Activated naive CD8-positive, alpha-beta T cell treated with anti-CD3 and anti-CD28 coated beads, Interleukin-2, amount 10 ng/mL, durations not matched to agents 7 days and 5 days (primary cell): ENCODE measurements at regions of chr16 and their contacts with region 1.

Region 1: GRCh38 chr16:28211712-28212534 is at the start of gene XPO6:
- DNase-seq: peak; percentile 100
- ATAC-seq: peak; percentile 80
- H3K4me3 Mint-ChIP-seq: peak within 1 kb of the TSS; percentile 97
- H3K27ac Mint-ChIP-seq: peak within 1 kb of the TSS; percentile 95
- H3K4me1 Mint-ChIP-seq: peaks cover 23% of the 10 kb centered on the region
- H3K27me3 Mint-ChIP-seq: no peaks in the 10 kb centered on the region
- total RNA-seq, gene XPO6: 261 to 280 TPM

Region 2: GRCh38 chr16:27951489-27952120 is 260.3 kb before region 1 on chr16:
- POLR2A ChIA-PET with region 1: no interaction called
- DNase-seq: no peak
- ATAC-seq: no peak
- H3K4me3 Mint-ChIP-seq: no peak overlapping the region
- H3K27ac Mint-ChIP-seq: no peak overlapping the region
- H3K4me1 Mint-ChIP-seq: no peaks in the 10 kb centered on the region
- H3K27me3 Mint-ChIP-seq: peaks cover 23% of the 10 kb centered on the region

Region 3: DNA sequence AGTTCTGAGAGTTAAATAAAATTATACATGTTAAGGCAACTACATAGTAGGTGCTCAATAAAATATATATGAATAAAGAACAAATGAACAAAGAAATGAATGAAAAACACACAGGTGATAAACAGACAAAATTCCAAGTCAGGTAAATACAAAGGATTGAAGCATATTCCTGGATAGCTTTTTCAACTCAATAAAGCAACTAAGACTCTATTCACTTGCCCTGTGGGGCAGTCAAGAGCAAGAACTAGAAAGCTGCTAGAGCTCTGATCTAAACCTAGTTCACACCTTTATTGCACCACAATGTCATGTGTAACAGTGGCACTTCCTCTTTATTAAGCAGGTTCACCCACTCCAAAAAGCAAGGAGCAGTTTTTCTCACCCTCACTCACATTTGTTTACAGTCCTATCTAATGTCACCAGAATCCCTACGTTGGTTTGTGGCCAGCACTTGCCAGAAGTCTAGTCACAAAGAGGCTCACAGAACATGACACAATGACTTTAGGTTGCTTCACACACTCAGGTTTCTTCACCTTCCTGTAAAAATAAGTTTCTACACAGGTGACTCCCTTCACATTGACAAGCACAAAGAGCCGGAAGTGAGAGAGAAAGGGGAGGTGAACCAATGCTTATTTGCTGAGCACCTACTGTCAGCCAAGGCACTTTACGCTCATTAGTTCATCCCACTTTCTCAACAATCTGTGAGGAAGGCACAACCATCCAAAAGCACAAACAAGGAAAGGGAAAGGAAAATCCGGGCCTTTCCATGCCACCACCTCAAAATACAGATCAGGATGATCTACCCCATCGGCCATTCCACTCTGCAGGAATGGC is 70.9 kb before region 1 on chr16:
- POLR2A ChIA-PET with region 1: interaction called, 46 read pairs
- DNase-seq: peak; percentile 49
- ATAC-seq: peak; percentile 76
- H3K4me3 Mint-ChIP-seq: peak overlapping the region; percentile 84
- H3K27ac Mint-ChIP-seq: peak overlapping the region; percentile 99
- H3K4me1 Mint-ChIP-seq: peaks cover 75% of the 10 kb centered on the region
- H3K27me3 Mint-ChIP-seq: no peaks in the 10 kb centered on the region

Region 4: DNA sequence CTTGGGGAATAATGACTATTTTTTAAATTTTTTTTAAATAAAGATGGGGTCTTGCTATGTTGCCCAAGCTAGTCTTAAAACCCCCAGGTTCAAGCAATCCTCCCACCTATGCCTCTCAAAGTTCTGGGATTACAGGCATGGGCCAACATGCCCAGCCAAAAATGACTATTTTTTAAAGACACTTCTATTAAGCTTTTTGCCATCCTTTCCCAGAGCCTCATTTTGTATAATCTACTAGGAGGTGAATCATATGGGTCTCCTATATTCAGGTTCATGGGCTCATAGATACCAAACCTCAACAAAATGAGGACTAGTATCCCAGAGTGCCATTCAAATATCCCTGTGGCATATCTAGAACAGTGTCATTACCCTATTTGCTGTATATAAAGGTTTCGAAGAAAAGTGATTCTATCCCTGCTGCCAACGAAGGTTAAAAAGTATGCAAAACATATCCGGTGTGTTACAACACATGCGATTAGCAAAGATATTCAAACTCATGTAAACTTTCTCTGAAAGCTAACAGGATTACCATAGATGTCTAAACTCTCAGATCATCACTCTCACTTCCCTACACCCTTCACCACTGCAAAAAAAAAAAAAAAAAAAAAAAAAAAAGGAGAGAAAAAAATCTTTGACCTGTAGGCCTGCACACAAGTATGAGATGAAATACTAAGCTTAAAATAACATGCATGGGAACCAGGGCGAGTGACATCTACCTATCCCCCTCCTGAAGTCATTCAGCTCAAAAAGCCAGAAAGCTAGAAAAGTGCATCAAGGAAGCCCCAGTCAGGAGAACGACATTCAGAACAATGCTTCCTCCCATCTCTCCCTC is 23.6 kb before region 1 on chr16:
- POLR2A ChIA-PET with region 1: interaction called, 71 read pairs
- DNase-seq: no peak
- ATAC-seq: no peak
- H3K4me3 Mint-ChIP-seq: peak overlapping the region; percentile 59
- H3K27ac Mint-ChIP-seq: peak overlapping the region; percentile 89
- H3K4me1 Mint-ChIP-seq: peaks cover 84% of the 10 kb centered on the region
- H3K27me3 Mint-ChIP-seq: no peaks in the 10 kb centered on the region

Region 5: GRCh38 chr16:28193530-28194423 is 18.1 kb before region 1 on chr16:
- POLR2A ChIA-PET with region 1: interaction called, 71 read pairs
- DNase-seq: peak; percentile 56
- ATAC-seq: peak; percentile 26
- H3K4me3 Mint-ChIP-seq: peak overlapping the region; percentile 79
- H3K27ac Mint-ChIP-seq: peak overlapping the region; percentile 94
- H3K4me1 Mint-ChIP-seq: peaks cover 73% of the 10 kb centered on the region
- H3K27me3 Mint-ChIP-seq: no peaks in the 10 kb centered on the region

Region 6: DNA sequence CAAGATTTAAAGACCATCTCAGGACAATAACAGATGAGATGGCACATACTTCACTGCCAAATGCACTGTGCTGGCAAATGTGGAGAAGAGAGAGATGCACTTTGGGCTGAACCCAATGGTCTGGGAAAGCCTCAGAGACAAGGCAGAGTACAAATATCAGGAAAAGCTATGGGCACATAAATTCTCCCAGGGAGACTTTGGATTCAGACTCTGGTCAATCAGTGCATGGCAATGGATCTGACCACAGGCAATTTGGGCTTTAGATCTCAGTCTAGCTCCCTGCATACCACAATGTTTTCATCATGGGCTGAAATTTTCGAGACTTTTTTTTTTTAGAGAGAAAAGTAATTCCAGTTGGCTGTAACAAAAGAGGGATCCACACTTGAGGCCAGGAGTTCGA is 19.8 kb after region 1 on chr16:
- POLR2A ChIA-PET with region 1: no interaction called
- DNase-seq: no peak
- ATAC-seq: no peak
- H3K4me3 Mint-ChIP-seq: no peak overlapping the region
- H3K27ac Mint-ChIP-seq: no peak overlapping the region
- H3K4me1 Mint-ChIP-seq: no peaks in the 10 kb centered on the region
- H3K27me3 Mint-ChIP-seq: peaks cover 8% of the 10 kb centered on the region